HepG2 (cell line): ENCODE measurements at regions of chr1 and their contacts with region 1.

Region 1: DNA sequence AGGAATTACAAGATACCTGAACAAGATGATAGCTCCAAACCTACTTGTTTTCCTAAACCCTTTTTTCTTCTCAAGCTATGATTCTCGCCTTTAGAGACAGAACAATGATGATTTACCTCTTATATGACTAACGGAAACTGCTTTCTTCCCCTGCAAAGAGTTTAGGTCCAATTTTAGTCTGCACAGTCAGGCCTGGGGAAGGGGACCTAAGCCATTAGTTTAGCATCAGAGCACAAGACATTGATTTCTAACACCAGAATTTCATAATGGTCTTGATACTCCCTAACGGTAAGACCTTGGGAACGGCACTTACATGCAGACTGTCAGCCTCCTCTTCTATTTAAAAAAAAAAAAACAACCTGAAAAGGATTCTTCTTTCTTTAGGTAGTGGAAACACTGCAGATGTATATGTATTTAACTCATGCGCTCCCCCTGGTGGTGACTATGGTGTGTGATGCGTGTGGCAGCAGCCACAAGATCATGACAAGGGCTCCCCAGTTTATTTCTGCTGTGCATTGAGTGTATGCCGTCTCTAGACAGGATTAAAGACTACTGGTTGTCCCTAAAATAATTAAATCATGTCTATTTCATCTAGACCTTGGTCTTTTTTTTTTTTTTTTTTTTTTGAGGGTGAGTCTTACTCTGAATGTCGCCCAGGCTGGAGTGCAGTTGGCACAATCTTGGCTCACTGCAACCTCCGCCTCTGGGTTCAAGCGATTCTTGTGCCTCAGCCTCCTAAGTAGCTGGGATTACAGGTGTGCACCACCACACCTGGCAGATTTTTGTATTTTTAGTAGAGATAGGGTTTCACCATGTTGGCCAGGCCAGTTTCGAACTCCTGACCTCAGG is 37.3 kb upstream of the TMEM222 start:
- DNase-seq: peak; percentile 66
- ATAC-seq: peak; percentile 83
- H3K4me3 ChIP-seq: no peak overlapping the region
- H3K27ac ChIP-seq: no peak overlapping the region
- H3K4me1 ChIP-seq: no peaks in the 10 kb centered on the region
- H3K27me3 ChIP-seq: no peaks in the 10 kb centered on the region
- CTCF ChIP-seq: peak; percentile 76
- EP300 ChIP-seq: no peak
- POLR2A ChIP-seq: no peak
- RAD21 ChIP-seq: peak; percentile 14; the same call in 1 of the 2 replicates

Region 2: GRCh38 chr1:27044613-27045151 is 240.0 kb before region 1 on chr1:
- CTCF ChIA-PET with region 1: interaction called, 9 read pairs
- POLR2A ChIA-PET with region 1: no interaction called
- in situ Hi-C with region 1: loop called (anchors 10 kb)
- intact Hi-C with region 1: loop called (anchors 1 kb)
- DNase-seq: peak; percentile 62
- ATAC-seq: peak; percentile 87
- H3K4me3 ChIP-seq: no peak overlapping the region
- H3K27ac ChIP-seq: no peak overlapping the region
- H3K4me1 ChIP-seq: peaks cover 8% of the 10 kb centered on the region; the same call in 1 of the 2 replicates
- H3K27me3 ChIP-seq: peaks cover 6 to 40% of the 10 kb centered on the region in 2 experiments; a peak in 4 of 5 replicates
- CTCF ChIP-seq: peak; percentile 95
- EP300 ChIP-seq: no peak
- POLR2A ChIP-seq: no peak
- RAD21 ChIP-seq: peak; percentile 89

Region 3: DNA sequence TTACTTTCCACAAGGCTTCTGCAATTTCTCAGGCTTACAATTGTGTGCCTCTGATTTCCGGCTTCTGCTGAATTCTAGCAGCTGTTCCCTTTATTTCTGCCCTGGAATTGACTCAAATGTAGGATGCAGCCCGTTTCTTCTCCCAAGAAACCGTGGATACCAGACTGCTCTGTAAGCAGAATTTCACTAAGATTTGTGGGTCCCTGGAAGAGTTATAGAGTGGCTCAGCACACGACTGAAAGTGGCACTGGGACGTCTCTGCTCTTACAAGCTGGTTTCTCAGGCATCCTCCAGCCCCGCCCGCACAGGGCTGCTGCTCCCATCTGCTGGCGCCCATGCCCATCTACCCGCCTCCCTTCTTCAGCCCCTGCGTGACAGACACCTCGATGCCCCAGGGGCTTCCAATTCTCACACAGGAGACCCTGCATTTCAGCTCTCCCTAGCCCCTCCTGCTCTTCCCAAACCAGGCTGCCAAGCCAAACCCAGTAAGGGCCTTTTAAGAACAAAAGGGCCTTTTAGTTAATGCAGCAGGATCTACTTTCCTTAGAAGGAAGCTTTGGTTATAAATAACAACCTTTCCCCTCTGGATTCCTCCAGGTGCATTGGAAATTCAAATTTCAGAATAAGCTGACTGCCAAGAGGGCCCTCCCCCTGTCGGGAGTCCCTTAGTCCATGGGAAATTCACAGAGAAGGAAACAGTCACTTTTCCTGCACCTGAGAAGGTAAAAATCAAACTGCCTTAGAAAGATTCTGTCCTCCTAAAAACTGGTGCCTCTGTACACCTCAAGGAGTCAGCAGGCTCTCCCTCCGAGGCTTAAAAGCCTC is 226.6 kb before region 1 on chr1:
- CTCF ChIA-PET with region 1: no interaction called
- POLR2A ChIA-PET with region 1: no interaction called
- in situ Hi-C with region 1: no loop called
- intact Hi-C with region 1: no loop called
- DNase-seq: no peak
- ATAC-seq: no peak; the same call in 2 of the 3 replicates
- H3K4me3 ChIP-seq: no peak overlapping the region
- H3K27ac ChIP-seq: no peak overlapping the region
- H3K4me1 ChIP-seq: no peaks in the 10 kb centered on the region
- H3K27me3 ChIP-seq: peaks cover 0 to 34% of the 10 kb centered on the region in 2 experiments
- CTCF ChIP-seq: no peak
- EP300 ChIP-seq: no peak
- POLR2A ChIP-seq: no peak
- RAD21 ChIP-seq: no peak

Region 4: GRCh38 chr1:27102707-27103491 is 181.8 kb before region 1 on chr1:
- CTCF ChIA-PET with region 1: interaction called, 25 read pairs
- POLR2A ChIA-PET with region 1: no interaction called
- in situ Hi-C with region 1: loop called (anchors 5 kb)
- intact Hi-C with region 1: loop called (anchors 1 kb)
- DNase-seq: peak; percentile 39
- ATAC-seq: peak; percentile 76
- H3K4me3 ChIP-seq: no peak overlapping the region
- H3K27ac ChIP-seq: no peak overlapping the region
- H3K4me1 ChIP-seq: peaks cover 25% of the 10 kb centered on the region
- H3K27me3 ChIP-seq: no peaks in the 10 kb centered on the region; a peak in 1 of 5 replicates
- CTCF ChIP-seq: peak; percentile 98
- EP300 ChIP-seq: no peak
- POLR2A ChIP-seq: no peak
- RAD21 ChIP-seq: peak; percentile 95

Region 5: DNA sequence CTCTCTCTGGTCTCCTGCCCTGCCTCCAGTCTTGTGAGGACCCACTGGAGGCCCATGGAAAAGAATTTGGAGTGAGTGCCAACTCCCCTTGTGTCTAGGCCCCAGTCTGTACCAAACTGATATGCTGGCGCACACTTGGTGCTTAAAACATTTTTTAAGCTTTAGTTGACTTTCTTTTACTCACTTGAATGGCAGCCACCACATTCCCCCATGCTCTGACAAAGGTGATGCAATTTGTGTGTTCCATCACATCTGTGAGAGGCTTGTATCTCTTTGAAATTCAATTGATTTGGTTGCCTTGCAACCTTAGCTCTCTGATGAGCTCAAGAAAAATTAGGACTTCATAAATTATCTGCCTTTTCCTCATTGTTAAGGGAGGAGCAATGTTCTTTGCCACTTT is 80.7 kb before region 1 on chr1:
- CTCF ChIA-PET with region 1: interaction called, 22 read pairs
- POLR2A ChIA-PET with region 1: no interaction called
- in situ Hi-C with region 1: no loop called
- intact Hi-C with region 1: no loop called
- DNase-seq: no peak
- ATAC-seq: no peak
- H3K4me3 ChIP-seq: no peak overlapping the region
- H3K27ac ChIP-seq: no peak overlapping the region
- H3K4me1 ChIP-seq: no peaks in the 10 kb centered on the region
- H3K27me3 ChIP-seq: peaks cover 1 to 13% of the 10 kb centered on the region in 2 experiments; a peak in 2 of 5 replicates
- CTCF ChIP-seq: no peak
- EP300 ChIP-seq: no peak
- POLR2A ChIP-seq: no peak
- RAD21 ChIP-seq: no peak

Region 6: DNA sequence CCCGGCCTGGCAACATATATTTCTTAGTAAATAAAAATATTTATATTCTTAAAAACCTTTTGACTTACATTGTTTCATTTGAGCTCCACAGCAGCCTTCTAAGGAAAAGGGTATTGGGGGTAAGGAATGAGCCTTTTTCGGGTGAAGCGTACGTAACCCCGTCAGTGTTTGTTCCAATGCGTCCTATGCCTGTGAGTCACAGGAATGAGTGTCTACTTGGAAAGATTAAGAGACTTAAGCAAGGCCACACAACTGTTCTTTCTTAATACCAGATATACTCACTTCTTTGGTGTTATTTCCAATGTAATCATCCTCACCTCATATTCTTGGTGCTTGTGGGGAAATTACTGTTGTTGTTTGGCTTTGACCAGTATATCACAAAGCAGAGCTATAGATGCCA is 27.5 kb before region 1 on chr1:
- CTCF ChIA-PET with region 1: no interaction called
- POLR2A ChIA-PET with region 1: no interaction called
- in situ Hi-C with region 1: no loop called
- intact Hi-C with region 1: no loop called
- DNase-seq: no peak
- ATAC-seq: no peak
- H3K4me3 ChIP-seq: no peak overlapping the region
- H3K27ac ChIP-seq: no peak overlapping the region
- H3K4me1 ChIP-seq: peaks cover 12% of the 10 kb centered on the region
- H3K27me3 ChIP-seq: no peaks in the 10 kb centered on the region
- CTCF ChIP-seq: no peak
- EP300 ChIP-seq: no peak
- POLR2A ChIP-seq: no peak
- RAD21 ChIP-seq: no peak

Region 7: DNA sequence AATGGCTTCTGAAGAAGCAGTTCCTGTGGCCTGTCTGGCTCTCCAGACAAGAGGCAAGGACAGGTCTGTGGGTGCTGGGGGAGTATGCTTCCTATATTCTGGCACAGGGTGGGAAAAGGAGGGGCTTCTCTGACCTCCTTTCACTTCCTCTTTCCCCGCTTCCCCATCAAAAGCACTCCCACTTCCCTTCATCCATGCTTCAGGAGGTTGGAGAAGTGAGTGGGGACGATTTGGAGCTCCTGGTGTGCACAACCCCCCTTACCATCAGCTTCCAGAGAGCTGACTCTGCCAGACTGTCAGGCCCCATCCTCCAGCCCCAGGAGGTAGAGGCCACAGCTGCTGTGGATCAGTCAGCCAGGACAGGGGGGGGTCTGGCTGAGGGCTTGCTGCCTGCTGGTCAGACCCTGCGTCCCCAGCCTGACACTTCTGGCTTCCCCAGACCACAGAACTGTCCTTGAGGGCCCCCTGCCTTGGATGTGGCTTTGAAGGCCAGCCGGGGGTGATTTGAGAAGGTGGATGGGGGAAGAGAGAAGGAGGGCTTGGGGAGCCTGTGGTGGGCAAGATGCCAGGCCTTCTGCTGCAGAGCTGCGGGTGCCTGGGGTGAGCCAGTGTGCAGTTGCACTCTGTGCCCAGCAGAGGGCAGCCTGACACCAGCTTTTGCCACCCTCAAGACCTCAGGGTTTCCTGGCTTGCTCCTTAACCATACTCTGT is 15.8 kb after region 1 on chr1:
- CTCF ChIA-PET with region 1: no interaction called
- POLR2A ChIA-PET with region 1: no interaction called
- in situ Hi-C with region 1: no loop called
- intact Hi-C with region 1: no loop called
- DNase-seq: peak; percentile 61
- ATAC-seq: peak; percentile 86
- H3K4me3 ChIP-seq: no peak overlapping the region
- H3K27ac ChIP-seq: no peak overlapping the region
- H3K4me1 ChIP-seq: no peaks in the 10 kb centered on the region
- H3K27me3 ChIP-seq: no peaks in the 10 kb centered on the region
- CTCF ChIP-seq: peak; percentile 98
- EP300 ChIP-seq: no peak
- POLR2A ChIP-seq: no peak
- RAD21 ChIP-seq: peak; percentile 93